ENCODE measurements at regions of chrX and their contacts with region 1.

Region 1: DNA sequence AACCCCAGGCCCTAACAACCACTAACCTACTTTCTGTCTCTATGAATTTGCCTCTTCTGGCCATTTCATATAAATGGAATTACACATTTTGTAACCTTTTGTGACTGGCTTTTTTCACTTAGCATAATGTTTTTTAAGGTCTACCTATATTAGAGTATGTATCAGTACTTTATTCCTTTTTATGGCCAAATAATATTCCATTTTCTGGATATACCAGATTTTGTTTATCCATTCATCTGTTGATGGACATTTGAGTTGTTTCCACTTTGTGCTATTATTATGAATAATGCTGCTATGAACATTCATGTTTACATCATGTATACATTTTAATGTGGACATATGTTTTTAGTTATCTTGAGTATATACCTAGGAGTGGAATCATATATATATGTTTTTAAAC is 35.5 kb downstream of the REPS2 start:
- DNase-seq: no peak

Region 2: DNA sequence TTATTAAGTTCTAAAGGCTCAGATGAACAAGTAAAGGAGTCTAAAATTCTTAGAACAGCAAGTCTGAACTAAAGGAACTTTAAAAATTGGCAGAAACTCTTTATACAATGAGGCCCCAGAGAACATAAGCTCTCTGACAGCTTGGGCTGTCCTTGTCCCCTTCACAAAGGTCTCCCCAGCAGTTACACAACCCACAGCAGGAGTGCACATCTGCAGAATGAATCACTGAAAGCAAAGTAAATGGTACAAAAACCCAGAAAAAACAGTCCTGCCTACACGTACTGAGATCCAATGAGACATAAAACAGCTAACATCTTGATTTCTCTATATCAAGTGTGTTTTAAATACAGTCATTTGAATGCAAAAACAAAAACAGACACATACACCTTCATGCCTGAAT is 130.6 kb before region 1 on chrX:
- intact Hi-C with region 1: no loop called
- DNase-seq: no peak

Region 3: GRCh38 chrX:17007206-17007683 is 25.3 kb after region 1 on chrX:
- intact Hi-C with region 1: loop called (anchors 1 kb)
- DNase-seq: peak in 2 of 10 donors; percentile 40 to 77